ENCODE measurements at regions of chr7 and their contacts with region 1.

Region 1: GRCh38 chr7:142889816-142890215 is 4.3 kb upstream of the TRPV6 start:
- DNase-seq: no peak
- H3K4me3 ChIP-seq: no peak overlapping the region
- H3K27ac ChIP-seq: no peak overlapping the region
- H3K4me1 ChIP-seq: no peaks in the 10 kb centered on the region
- H3K27me3 ChIP-seq: no peaks in the 10 kb centered on the region
- CTCF ChIP-seq: no peak
- POLR2A ChIP-seq: no peak

Region 2: DNA sequence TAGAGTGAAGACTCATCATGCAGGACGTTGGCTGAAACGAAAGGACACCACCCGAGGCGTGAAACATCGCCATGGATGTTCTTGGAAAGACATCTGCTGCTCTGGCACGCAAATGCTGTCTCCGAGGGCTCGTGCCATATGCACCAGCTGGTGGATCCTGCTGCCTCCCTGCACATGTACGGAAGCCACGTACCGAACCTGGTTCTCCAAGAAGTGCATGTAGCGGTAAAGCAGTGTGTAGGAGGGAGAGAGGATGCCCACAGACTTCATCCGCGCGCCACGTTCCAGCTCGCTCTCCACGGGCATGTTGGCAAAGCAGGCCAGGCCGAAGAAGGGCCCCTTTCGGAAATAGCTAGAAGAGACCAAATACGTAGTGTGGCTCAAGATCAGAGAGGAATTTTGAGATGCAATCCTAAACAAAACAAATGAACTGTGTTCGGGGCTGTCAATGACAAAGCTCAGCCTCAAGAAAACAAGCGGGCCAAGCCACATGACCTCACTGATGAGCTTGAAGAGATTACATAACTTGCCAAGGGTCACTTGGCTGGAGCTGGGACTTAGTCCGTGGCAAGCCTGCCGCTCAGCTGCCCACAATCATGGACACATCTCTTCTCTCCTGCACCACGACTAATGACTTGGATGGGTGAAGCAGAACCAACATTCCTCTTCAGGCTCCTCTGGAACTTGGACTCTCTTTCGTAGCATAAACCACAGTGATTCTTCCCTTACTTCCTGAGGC is 1204.4 kb before region 1 on chr7:
- intact Hi-C with region 1: no loop called
- DNase-seq: no peak
- H3K4me3 ChIP-seq: no peak overlapping the region
- H3K27ac ChIP-seq: no peak overlapping the region
- H3K4me1 ChIP-seq: no peaks in the 10 kb centered on the region
- H3K27me3 ChIP-seq: no peaks in the 10 kb centered on the region
- CTCF ChIP-seq: no peak
- POLR2A ChIP-seq: no peak

Region 3: GRCh38 chr7:142875481-142876234 is 14.2 kb before region 1 on chr7:
- intact Hi-C with region 1: loop called (anchors 2 kb)
- DNase-seq: no peak
- H3K4me3 ChIP-seq: no peak overlapping the region
- H3K27ac ChIP-seq: no peak overlapping the region
- H3K4me1 ChIP-seq: no peaks in the 10 kb centered on the region
- H3K27me3 ChIP-seq: no peaks in the 10 kb centered on the region
- CTCF ChIP-seq: no peak
- POLR2A ChIP-seq: no peak

Measured in breast epithelium (tissue), 4 donors.